Kidney (tissue), 22 donors: ENCODE measurements at regions of chr2 and their contacts with region 1.

Region 1: GRCh38 chr2:203484266-203485112 is 50.6 kb downstream of the RAPH1 start:
- DNase-seq: peak in 3 of 5 donors; percentile 17 to 63 (median 43)
- H3K4me3 ChIP-seq: no peak overlapping the region
- H3K27ac ChIP-seq: no peak overlapping the region
- H3K4me1 ChIP-seq: no peaks in the 10 kb centered on the region
- H3K27me3 ChIP-seq: no peaks in the 10 kb centered on the region
- CTCF ChIP-seq: peak; percentile 67

Region 2: GRCh38 chr2:203427061-203427460 is 57.4 kb before region 1 on chr2:
- intact Hi-C with region 1: no loop called
- DNase-seq: no peak
- H3K4me3 ChIP-seq: no peak overlapping the region
- H3K27ac ChIP-seq: no peak overlapping the region
- H3K4me1 ChIP-seq: no peaks in the 10 kb centered on the region
- H3K27me3 ChIP-seq: no peaks in the 10 kb centered on the region
- CTCF ChIP-seq: no peak

Region 3: DNA sequence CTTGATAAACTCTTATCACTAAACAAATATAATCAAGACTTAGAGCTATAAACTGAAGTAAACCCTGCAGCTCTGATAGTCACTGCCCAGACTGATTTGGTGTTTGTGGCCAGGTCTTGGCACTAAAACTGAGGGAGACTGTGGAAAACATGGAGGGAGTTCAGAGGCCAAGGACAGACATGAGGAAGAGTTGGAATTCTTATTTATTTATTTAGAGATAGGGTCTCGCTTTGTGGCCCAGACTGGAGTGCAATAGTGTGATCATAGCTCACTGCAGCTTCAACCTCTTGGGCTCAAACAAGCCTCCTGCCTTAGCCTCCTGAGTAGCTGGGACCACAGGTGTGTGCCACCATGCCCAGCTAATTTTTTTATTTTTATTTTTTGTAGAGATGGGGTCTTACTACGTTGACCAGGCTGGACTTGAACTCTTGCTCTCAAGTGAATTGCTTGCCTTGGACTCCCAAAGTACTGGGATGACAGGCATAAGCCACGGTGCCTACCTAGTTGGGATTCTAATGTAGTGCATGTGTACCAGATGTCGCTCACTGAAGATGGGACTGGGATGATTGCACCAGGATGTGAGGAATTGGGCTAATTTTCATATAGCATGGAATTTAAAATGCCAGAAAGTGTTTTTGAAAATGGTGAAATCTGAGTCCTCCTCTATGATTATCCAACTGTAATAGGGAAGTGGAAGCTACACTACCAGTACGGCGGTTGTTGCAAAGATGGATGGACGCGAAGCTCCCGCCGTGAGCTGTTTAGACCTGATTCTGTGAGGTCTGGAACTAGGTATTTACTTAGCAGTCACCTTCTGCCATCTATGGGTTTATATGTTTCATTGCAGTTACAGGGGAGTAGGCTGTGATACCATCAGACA is 330.4 kb after region 1 on chr2:
- intact Hi-C with region 1: loop called (anchors 10 kb)
- DNase-seq: peak; percentile 54 to 85 (median 75)
- H3K4me3 ChIP-seq: no peak overlapping the region
- H3K27ac ChIP-seq: no peak overlapping the region
- H3K4me1 ChIP-seq: peaks cover 0 to 9% (median 2%) of the 10 kb centered on the region in 3 donors
- H3K27me3 ChIP-seq: no peaks in the 10 kb centered on the region
- CTCF ChIP-seq: peak; percentile 74

Region 4: GRCh38 chr2:203936535-203936934 is 452.0 kb after region 1 on chr2 and contains the start of gene ICOS:
- intact Hi-C with region 1: no loop called
- DNase-seq: no peak
- H3K4me3 ChIP-seq: no peak within 1 kb of the TSS
- H3K27ac ChIP-seq: no peak within 1 kb of the TSS
- H3K4me1 ChIP-seq: no peaks in the 10 kb centered on the region
- H3K27me3 ChIP-seq: no peaks in the 10 kb centered on the region
- CTCF ChIP-seq: no peak
- total RNA-seq, gene ICOS: 0.85 TPM